ENCODE measurements at regions of chr20 and their contacts with region 1.

Region 1: GRCh38 chr20:36732456-36732855 is 13.4 kb downstream of the NDRG3 start:
- DNase-seq: no peak
- H3K4me3 ChIP-seq: no peak overlapping the region
- H3K4me3 Mint-ChIP-seq: no peak overlapping the region
- H3K27ac ChIP-seq: no peak overlapping the region
- H3K27ac Mint-ChIP-seq: peak overlapping the region in 2 of 8 donors; percentile 72 to 87
- H3K4me1 ChIP-seq: peaks cover 15% of the 10 kb centered on the region
- H3K4me1 Mint-ChIP-seq: peaks cover 19 to 52% (median 32%) of the 10 kb centered on the region in 3 donors
- H3K27me3 ChIP-seq: no peaks in the 10 kb centered on the region
- H3K27me3 Mint-ChIP-seq: no peaks in the 10 kb centered on the region

Region 2: DNA sequence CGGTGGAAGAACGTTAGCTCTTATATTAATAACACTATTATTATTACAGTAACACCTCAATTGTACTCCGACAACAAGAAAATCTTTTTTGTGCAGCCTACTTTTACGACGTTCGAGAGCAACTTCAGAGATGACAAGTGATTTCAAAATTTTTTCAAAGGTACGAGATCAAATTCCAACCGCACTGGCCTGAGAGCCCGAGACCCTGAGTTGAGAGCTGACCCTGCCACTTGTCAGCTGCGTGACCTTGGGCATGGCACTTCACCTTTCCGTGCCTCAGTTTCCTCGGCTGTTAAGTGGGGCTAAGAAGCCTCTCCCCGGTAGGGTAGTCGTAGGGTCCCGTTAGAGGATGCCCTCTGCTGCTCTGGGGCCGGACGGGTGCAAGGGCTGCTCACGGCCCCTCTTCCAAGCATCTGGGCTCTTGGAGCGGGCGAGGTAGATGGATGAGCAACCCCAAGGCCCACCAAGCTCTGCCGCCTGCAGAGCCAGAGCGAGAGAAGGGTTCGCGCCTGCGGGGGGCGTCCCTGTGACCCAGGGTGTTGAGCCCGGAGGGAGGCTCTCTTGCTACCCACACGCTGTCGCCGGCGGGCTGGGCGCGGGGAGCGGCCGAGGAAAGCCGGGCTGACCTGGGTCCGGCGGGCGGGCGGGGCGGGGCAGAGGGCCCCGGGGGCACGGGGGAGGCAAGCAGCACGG is 12.9 kb after region 1 on chr20:
- CTCF ChIA-PET with region 1: interaction called, 15 read pairs
- POLR2A ChIA-PET with region 1: interaction called, 7 read pairs
- DNase-seq: peak in 1 of 5 donors; percentile 13
- H3K4me3 ChIP-seq: peak overlapping the region; percentile 84
- H3K4me3 Mint-ChIP-seq: peak overlapping the region; percentile 82 to 93 (median 88)
- H3K27ac ChIP-seq: peak overlapping the region; percentile 31
- H3K27ac Mint-ChIP-seq: peak overlapping the region; percentile 15 to 87 (median 78)
- H3K4me1 ChIP-seq: peaks cover 20% of the 10 kb centered on the region
- H3K4me1 Mint-ChIP-seq: peaks cover 18 to 43% (median 35%) of the 10 kb centered on the region in 3 donors
- H3K27me3 ChIP-seq: no peaks in the 10 kb centered on the region
- H3K27me3 Mint-ChIP-seq: no peaks in the 10 kb centered on the region

Measured in CD8-positive, alpha-beta memory T cell (primary cell).